IMR-90 (cell line): ENCODE measurements at regions of chr9 and their contacts with region 1.

Region 1: GRCh38 chr9:78235756-78236538 is at the start of gene CEP78:
- DNase-seq: peak; percentile 92
- ATAC-seq: peak; percentile 96
- H3K4me3 ChIP-seq: peak within 1 kb of the TSS; percentile 90
- H3K27ac ChIP-seq: peak within 1 kb of the TSS; percentile 71
- H3K4me1 ChIP-seq: peaks cover 5% of the 10 kb centered on the region; the same call in 1 of the 2 replicates
- H3K27me3 ChIP-seq: no peaks in the 10 kb centered on the region
- CTCF ChIP-seq: no peak
- POLR2A ChIP-seq: peak; percentile 51; the same call in 1 of the 2 replicates
- RAD21 ChIP-seq: no peak
- total RNA-seq, gene CEP78: 18.3 and 21.4 TPM in 2 replicates

Region 2: GRCh38 chr9:77488439-77489126 is 747.4 kb before region 1 on chr9:
- CTCF ChIA-PET with region 1: no interaction called
- POLR2A ChIA-PET with region 1: no interaction called
- dilution Hi-C with region 1: no loop called
- in situ Hi-C with region 1: no loop called
- intact Hi-C with region 1: no loop called
- DNase-seq: peak; percentile 20
- ATAC-seq: peak; percentile 68
- H3K4me3 ChIP-seq: no peak overlapping the region
- H3K27ac ChIP-seq: no peak overlapping the region
- H3K4me1 ChIP-seq: no peaks in the 10 kb centered on the region
- H3K27me3 ChIP-seq: no peaks in the 10 kb centered on the region
- CTCF ChIP-seq: peak; percentile 61
- POLR2A ChIP-seq: no peak
- RAD21 ChIP-seq: peak; percentile 64

Region 3: GRCh38 chr9:77960356-77961153 is 275.4 kb before region 1 on chr9:
- CTCF ChIA-PET with region 1: no interaction called
- POLR2A ChIA-PET with region 1: no interaction called
- dilution Hi-C with region 1: no loop called
- in situ Hi-C with region 1: no loop called
- intact Hi-C with region 1: loop called (anchors 10 kb)
- DNase-seq: no peak
- ATAC-seq: peak; percentile 40; the same call in 1 of the 2 replicates
- H3K4me3 ChIP-seq: no peak overlapping the region
- H3K27ac ChIP-seq: no peak overlapping the region
- H3K4me1 ChIP-seq: peaks cover 6% of the 10 kb centered on the region
- H3K27me3 ChIP-seq: no peaks in the 10 kb centered on the region
- CTCF ChIP-seq: no peak
- POLR2A ChIP-seq: no peak
- RAD21 ChIP-seq: no peak

Region 4: GRCh38 chr9:78144663-78145377 is 91.1 kb before region 1 on chr9:
- CTCF ChIA-PET with region 1: no interaction called
- POLR2A ChIA-PET with region 1: no interaction called
- dilution Hi-C with region 1: no loop called
- in situ Hi-C with region 1: no loop called
- intact Hi-C with region 1: loop called (anchors 10 kb)
- DNase-seq: no peak
- ATAC-seq: no peak
- H3K4me3 ChIP-seq: no peak overlapping the region
- H3K27ac ChIP-seq: no peak overlapping the region
- H3K4me1 ChIP-seq: no peaks in the 10 kb centered on the region
- H3K27me3 ChIP-seq: no peaks in the 10 kb centered on the region
- CTCF ChIP-seq: no peak
- POLR2A ChIP-seq: no peak
- RAD21 ChIP-seq: no peak

Region 5: DNA sequence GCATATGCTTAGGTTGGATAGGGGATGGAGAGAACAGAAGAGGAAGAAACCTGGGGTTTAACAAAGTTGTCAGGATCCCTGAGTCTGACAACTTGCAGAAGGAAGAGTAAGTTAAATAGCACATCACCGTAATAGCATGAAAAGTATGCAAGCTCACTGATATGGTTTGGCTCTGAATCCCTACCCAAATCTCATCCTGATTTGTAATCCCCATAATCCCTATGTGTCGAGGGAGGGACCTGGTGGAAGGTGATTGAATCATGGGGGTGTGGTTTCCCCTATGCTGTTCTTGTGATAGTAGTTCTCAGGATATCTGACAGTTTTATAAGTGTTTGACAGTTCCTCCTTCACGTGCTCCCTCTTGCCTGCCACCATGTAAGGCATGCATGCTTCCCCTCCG is 254.3 kb after region 1 on chr9:
- CTCF ChIA-PET with region 1: no interaction called
- POLR2A ChIA-PET with region 1: no interaction called
- dilution Hi-C with region 1: no loop called
- in situ Hi-C with region 1: no loop called
- intact Hi-C with region 1: no loop called
- DNase-seq: peak; percentile 5
- ATAC-seq: no peak
- H3K4me3 ChIP-seq: no peak overlapping the region
- H3K27ac ChIP-seq: no peak overlapping the region
- H3K4me1 ChIP-seq: no peaks in the 10 kb centered on the region
- H3K27me3 ChIP-seq: peaks cover 2% of the 10 kb centered on the region
- CTCF ChIP-seq: no peak
- POLR2A ChIP-seq: no peak
- RAD21 ChIP-seq: no peak

Region 6: GRCh38 chr9:78811622-78812276 is 575.8 kb after region 1 on chr9:
- CTCF ChIA-PET with region 1: no interaction called
- POLR2A ChIA-PET with region 1: no interaction called
- dilution Hi-C with region 1: no loop called
- in situ Hi-C with region 1: no loop called
- intact Hi-C with region 1: no loop called
- DNase-seq: peak; percentile 61
- ATAC-seq: peak; percentile 46; the same call in 1 of the 2 replicates
- H3K4me3 ChIP-seq: no peak overlapping the region
- H3K27ac ChIP-seq: no peak overlapping the region
- H3K4me1 ChIP-seq: no peaks in the 10 kb centered on the region
- H3K27me3 ChIP-seq: no peaks in the 10 kb centered on the region
- CTCF ChIP-seq: no peak
- POLR2A ChIP-seq: no peak
- RAD21 ChIP-seq: no peak

Region 7: DNA sequence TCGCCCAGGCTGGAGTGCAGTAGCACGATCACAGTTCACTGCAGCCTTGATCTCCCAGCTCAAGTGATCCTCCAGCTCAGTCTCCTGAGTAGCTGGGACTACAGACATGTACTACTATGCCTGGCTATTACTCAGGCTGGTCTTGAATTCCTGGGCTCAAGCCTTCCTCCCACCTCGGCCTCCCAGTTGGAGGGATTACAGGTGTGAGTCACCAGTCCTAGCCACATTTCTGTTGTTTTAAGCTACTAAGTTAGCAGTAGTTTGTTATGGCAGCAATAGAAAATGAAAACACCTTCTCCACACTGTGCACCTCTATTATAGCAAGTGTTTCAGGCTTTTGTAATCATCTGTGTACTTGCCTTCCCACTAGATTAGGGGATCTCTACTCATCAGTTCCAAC is 746.9 kb after region 1 on chr9:
- CTCF ChIA-PET with region 1: no interaction called
- POLR2A ChIA-PET with region 1: no interaction called
- dilution Hi-C with region 1: no loop called
- in situ Hi-C with region 1: no loop called
- intact Hi-C with region 1: no loop called
- DNase-seq: peak; percentile 56
- ATAC-seq: no peak
- H3K4me3 ChIP-seq: no peak overlapping the region
- H3K27ac ChIP-seq: no peak overlapping the region
- H3K4me1 ChIP-seq: peaks cover 5% of the 10 kb centered on the region; the same call in 1 of the 2 replicates
- H3K27me3 ChIP-seq: no peaks in the 10 kb centered on the region
- CTCF ChIP-seq: no peak
- POLR2A ChIP-seq: no peak
- RAD21 ChIP-seq: no peak